ENCODE measurements at regions of chr5 and their contacts with region 1.

Region 1: GRCh38 chr5:126354012-126354857 is 69.0 kb upstream of the GRAMD2B start:
- DNase-seq: no peak
- H3K4me3 Mint-ChIP-seq: peak overlapping the region; percentile 13
- H3K27ac Mint-ChIP-seq: no peak overlapping the region
- H3K4me1 Mint-ChIP-seq: peaks cover 15% of the 10 kb centered on the region
- H3K27me3 Mint-ChIP-seq: peaks cover 17% of the 10 kb centered on the region

Region 2: DNA sequence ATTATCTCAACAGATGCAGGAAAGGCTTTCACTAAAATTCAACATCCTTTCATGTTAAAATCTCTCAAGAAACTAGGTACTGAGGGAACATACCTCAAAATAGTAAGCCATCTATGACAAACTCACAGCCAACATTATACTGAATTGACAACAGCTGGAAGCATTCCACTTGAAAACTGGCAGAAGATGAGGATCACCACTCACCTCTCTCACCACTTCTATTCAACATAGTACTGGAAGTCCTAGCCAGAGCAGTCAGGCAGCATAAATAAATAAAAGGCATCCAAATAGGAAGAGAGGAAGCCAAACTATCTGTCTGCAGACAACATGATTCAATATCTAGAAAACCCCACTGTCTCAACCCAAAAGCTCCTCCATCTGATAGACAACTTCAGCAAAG is 134.6 kb before region 1 on chr5:
- intact Hi-C with region 1: no loop called
- DNase-seq: no peak
- H3K4me3 Mint-ChIP-seq: no peak overlapping the region
- H3K27ac Mint-ChIP-seq: no peak overlapping the region
- H3K4me1 Mint-ChIP-seq: no peaks in the 10 kb centered on the region
- H3K27me3 Mint-ChIP-seq: no peaks in the 10 kb centered on the region

Region 3: DNA sequence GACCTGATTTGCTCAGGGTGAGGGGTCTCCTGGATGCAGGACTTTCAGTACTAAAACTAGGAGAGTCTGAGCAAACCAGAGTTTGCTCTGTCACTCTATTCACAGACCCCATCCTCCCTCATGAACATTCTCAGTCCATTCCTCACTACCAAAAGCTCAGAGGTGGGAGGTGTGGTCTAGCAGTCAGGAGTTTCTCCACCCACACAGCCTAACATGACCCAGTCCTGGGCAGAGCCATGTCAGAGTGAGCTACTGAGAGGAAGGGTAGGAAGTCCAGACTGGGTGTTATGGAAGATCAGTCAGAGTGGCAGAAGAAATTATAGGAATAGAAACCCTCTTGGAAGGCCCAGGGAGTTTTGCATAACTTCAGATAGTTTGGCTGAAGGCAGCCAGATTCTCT is 44.4 kb before region 1 on chr5:
- intact Hi-C with region 1: no loop called
- DNase-seq: no peak
- H3K4me3 Mint-ChIP-seq: no peak overlapping the region
- H3K27ac Mint-ChIP-seq: no peak overlapping the region
- H3K4me1 Mint-ChIP-seq: no peaks in the 10 kb centered on the region
- H3K27me3 Mint-ChIP-seq: peaks cover 6% of the 10 kb centered on the region

Region 4: GRCh38 chr5:126499853-126500342 is 145.7 kb after region 1 on chr5:
- intact Hi-C with region 1: loop called (anchors 1 kb)
- DNase-seq: no peak
- H3K4me3 Mint-ChIP-seq: no peak overlapping the region
- H3K27ac Mint-ChIP-seq: no peak overlapping the region
- H3K4me1 Mint-ChIP-seq: peaks cover 6% of the 10 kb centered on the region
- H3K27me3 Mint-ChIP-seq: no peaks in the 10 kb centered on the region

Measured in activated T-helper 2 cell treated with anti-CD3 and anti-CD28 coated beads, Interferon-gamma antibody, Interleukin-2, Interleukin-4, amounts not matched to agents 10 μg/mL and 5 μg/mL and 100 μg/mL, durations not matched to agents 14 hours and 24 hours and 36 hours (primary cell).